ENCODE measurements at regions of chrX and their contacts with region 1.

Region 1: DNA sequence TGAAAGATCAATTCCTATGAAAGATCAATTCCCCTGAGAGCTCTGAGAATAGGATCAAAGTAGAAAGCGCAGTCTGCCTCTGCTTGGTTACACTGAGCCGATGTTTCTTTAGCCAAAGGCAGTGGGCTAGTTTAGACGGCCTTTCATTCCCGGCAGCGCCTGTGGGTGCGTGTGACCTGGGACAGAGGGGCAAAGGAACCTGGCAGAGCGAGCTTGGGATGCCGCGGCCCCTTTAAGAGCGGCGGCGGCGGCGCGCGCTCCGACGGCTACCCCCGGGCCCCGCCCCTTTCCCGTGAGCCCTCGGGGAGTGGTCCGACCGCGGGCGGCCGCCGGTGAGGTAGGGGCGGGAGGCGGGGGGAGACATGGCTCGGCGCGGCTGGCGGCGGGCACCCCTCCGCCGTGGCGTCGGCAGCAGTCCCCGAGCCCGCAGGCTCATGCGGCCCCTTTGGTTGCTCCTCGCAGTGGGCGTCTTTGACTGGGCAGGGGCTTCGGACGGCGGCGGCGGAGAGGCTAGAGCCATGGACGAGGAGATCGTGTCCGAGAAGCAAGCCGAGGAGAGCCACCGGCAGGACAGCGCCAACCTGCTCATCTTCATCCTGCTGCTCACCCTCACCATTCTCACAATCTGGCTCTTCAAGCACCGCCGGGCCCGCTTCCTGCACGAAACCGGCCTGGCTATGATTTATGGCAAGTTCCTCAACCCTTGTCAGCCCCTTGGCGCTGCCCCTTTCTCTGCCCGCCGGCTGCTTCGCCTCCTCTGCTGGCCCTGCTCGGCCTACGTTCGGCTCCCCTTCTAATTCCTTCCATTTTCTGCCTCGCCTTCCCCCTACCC is at the start of gene SLC9A6:
- DNase-seq: peak in 1 of 2 experiments; percentile 66
- H3K4me3 ChIP-seq: peak within 1 kb of the TSS; percentile 64 to 94 (median 82)
- H3K27ac ChIP-seq: peak within 1 kb of the TSS; percentile 36; the same call in 1 of the 2 replicates
- H3K4me1 ChIP-seq: no peaks in the 10 kb centered on the region
- H3K27me3 ChIP-seq: no peaks in the 10 kb centered on the region
- CTCF ChIP-seq: no peak
- EP300 ChIP-seq: no peak
- POLR2A ChIP-seq: no peak; a peak in 1 of 3 replicates
- RAD21 ChIP-seq: no peak
- total RNA-seq, gene SLC9A6: 12.2 and 14.1 TPM in 2 replicates

Region 2: DNA sequence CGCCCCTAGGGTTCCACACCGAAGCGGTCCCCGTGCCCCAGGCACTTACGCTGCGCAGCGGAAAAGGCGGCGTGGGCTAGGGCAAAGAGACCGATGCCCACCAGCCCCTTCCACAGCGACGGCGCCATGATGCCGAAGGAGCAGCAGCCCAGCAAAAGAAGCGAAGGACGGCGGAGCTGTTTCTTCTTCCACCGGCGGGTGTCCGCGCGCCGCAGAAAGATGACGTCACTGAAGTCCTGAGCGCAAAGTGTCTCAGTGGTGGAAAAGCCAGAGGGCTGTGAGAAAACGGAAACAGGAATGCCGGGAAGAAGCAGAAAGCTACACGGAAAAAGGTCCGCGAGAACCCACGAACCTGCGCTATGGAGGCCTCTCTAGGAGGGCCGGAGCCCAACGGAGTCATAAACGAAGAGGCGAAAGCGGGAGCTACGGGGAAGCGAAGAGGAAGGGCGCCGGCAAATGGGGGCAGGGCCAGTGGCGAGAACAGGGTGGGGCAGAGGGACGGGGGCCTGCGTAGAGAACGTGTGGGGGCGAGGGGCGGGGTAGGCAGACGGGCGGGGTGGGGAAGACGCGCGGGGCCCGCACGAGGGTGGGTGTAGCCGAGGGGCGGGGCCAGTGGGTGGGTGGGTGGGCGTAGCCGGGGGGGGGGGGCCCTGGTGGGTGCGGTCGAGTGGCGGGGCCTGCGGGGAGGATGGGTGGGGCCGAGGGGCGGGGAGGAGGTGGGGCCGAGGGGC is 11.6 kb before region 1 on chrX and contains the start of gene MMGT1:
- CTCF ChIA-PET with region 1: interaction called, 4 read pairs
- POLR2A ChIA-PET with region 1: interaction called, 14 read pairs
- DNase-seq: peak in 1 of 2 experiments; percentile 83
- H3K4me3 ChIP-seq: peak within 1 kb of the TSS; percentile 72 to 100 (median 86)
- H3K27ac ChIP-seq: peak within 1 kb of the TSS; percentile 81
- H3K4me1 ChIP-seq: no peaks in the 10 kb centered on the region; a peak in 3 of 7 replicates
- H3K27me3 ChIP-seq: no peaks in the 10 kb centered on the region
- CTCF ChIP-seq: no peak
- EP300 ChIP-seq: no peak
- POLR2A ChIP-seq: peak; percentile 54 to 62
- RAD21 ChIP-seq: no peak
- total RNA-seq, gene MMGT1: 19.1 and 20.5 TPM in 2 replicates

Region 3: GRCh38 chrX:136055651-136056221 is 70.4 kb after region 1 on chrX:
- CTCF ChIA-PET with region 1: no interaction called
- POLR2A ChIA-PET with region 1: no interaction called
- DNase-seq: no peak
- H3K4me3 ChIP-seq: no peak overlapping the region
- H3K27ac ChIP-seq: no peak overlapping the region
- H3K4me1 ChIP-seq: no peaks in the 10 kb centered on the region
- H3K27me3 ChIP-seq: no peaks in the 10 kb centered on the region
- CTCF ChIP-seq: no peak
- EP300 ChIP-seq: no peak
- POLR2A ChIP-seq: no peak
- RAD21 ChIP-seq: no peak